ENCODE measurements at regions of chr19 and their contacts with region 1.

Region 1: DNA sequence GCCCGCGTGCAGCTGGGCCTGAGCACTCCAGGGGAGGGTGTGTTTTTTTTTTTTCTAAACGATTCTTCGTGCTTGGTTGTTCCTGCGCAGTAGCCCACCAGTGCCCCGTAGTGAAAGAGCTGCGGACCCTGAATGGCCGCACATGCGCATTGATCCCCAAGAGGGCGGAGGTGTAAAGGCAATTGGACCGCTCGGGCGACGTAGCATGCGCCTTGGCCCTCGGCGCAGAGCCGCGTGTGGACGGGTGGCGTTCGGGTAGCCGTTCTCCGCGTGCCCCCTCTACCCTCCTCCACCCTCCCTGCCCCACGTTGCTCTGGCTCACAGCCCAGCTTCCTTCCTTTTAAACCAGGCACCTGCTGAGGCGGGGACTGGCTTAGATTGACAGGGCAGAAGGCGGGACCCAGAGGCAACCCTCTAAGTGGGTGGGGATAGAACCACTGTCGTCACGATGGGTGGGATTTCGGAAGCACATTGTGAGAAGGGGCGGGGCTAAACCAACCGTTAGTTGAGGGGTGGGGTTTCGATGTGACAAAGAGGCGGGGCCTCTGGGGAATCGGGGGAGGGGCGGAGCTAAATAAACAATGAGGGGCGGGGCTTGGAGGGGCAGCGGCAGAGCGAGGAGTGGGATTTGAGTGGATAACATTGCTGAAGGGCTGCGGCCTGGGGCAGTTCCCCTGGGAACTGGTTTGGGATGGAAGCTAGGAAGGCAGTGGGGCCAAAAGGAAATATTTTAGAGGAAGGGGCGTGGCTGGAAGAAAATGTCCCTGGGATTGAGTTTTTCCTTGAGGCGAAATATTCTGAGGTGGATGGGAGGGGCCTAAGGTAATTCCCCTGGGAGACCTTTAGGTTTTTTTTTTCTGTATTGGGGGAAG is 543 bp upstream of the NUP62 start:
- DNase-seq: peak; percentile 95
- H3K4me3 Mint-ChIP-seq: peak overlapping the region; percentile 95
- H3K27ac Mint-ChIP-seq: peak overlapping the region; percentile 97
- H3K4me1 Mint-ChIP-seq: peaks cover 68% of the 10 kb centered on the region
- H3K27me3 Mint-ChIP-seq: no peaks in the 10 kb centered on the region

Region 2: GRCh38 chr19:49858031-49858991 is 71.5 kb before region 1 on chr19:
- CTCF ChIA-PET with region 1: no interaction called
- POLR2A ChIA-PET with region 1: no interaction called
- DNase-seq: no peak
- H3K4me3 Mint-ChIP-seq: no peak overlapping the region
- H3K27ac Mint-ChIP-seq: no peak overlapping the region
- H3K4me1 Mint-ChIP-seq: peaks cover 5% of the 10 kb centered on the region
- H3K27me3 Mint-ChIP-seq: no peaks in the 10 kb centered on the region

Region 3: GRCh38 chr19:49869441-49870176 is 60.2 kb before region 1 on chr19:
- CTCF ChIA-PET with region 1: interaction called, 3 read pairs
- POLR2A ChIA-PET with region 1: interaction called, 10 read pairs
- DNase-seq: peak; percentile 94
- H3K4me3 Mint-ChIP-seq: no peak overlapping the region
- H3K27ac Mint-ChIP-seq: no peak overlapping the region
- H3K4me1 Mint-ChIP-seq: peaks cover 46% of the 10 kb centered on the region
- H3K27me3 Mint-ChIP-seq: no peaks in the 10 kb centered on the region

Region 4: GRCh38 chr19:49877020-49877878 is 52.6 kb before region 1 on chr19 and contains the starts of genes AKT1S1 and TBC1D17:
- CTCF ChIA-PET with region 1: no interaction called
- POLR2A ChIA-PET with region 1: interaction called, 39 read pairs
- DNase-seq: peak; percentile 99
- H3K4me3 Mint-ChIP-seq: no peak within 1 kb of the TSS
- H3K27ac Mint-ChIP-seq: no peak within 1 kb of the TSS
- H3K4me1 Mint-ChIP-seq: peaks cover 32% of the 10 kb centered on the region
- H3K27me3 Mint-ChIP-seq: no peaks in the 10 kb centered on the region
- total RNA-seq, gene AKT1S1: 20.2 to 23.0 TPM
- total RNA-seq, gene TBC1D17: 42.3 to 47.6 TPM

Region 5: GRCh38 chr19:49889687-49890348 is 40.0 kb before region 1 on chr19:
- CTCF ChIA-PET with region 1: no interaction called
- POLR2A ChIA-PET with region 1: interaction called, 43 read pairs
- DNase-seq: peak; percentile 79
- H3K4me3 Mint-ChIP-seq: peak overlapping the region; percentile 68
- H3K27ac Mint-ChIP-seq: peak overlapping the region; percentile 62
- H3K4me1 Mint-ChIP-seq: peaks cover 33% of the 10 kb centered on the region
- H3K27me3 Mint-ChIP-seq: no peaks in the 10 kb centered on the region

Region 6: DNA sequence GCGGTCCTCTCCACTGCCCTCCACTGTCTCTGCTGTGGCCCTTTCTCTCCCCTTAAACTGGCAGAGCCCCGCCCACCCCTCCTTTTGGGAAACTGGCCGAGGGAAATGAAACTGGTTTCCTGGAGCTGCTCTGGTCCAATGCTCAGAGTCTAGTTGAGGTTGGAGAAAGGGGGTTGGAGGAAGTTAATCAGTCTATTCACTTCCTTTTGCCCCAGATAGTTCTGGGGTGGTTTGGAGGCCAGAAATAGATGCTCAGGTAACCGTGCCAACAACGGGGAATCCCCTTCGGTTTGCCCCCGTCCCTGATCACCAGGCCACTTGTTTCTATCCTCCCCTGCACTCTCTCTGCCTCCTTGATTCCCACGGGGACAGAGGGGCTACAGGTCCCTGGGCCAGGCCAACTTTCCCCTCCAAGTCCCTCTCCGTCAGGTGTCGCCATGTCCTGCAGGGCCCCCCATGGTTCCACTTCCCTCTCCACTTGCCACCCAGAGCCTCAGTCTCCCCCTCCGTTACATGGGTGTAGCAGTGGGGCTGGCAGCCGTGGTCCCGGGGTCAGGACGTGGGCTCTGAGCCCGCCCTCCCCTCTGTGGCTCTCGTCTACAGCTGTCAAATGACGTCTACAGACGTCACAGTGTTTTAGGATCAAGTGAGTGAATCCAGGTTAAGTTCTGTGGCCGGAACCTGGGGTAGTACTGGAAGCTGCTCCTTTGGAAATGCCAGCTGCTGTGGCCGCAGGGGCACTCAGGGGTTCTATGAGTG is 32.8 kb before region 1 on chr19 and contains the start of gene IL4I1:
- CTCF ChIA-PET with region 1: interaction called, 4 read pairs
- POLR2A ChIA-PET with region 1: interaction called, 43 read pairs
- DNase-seq: peak; percentile 76
- H3K4me3 Mint-ChIP-seq: peak within 1 kb of the TSS; percentile 80
- H3K27ac Mint-ChIP-seq: peak within 1 kb of the TSS; percentile 97
- H3K4me1 Mint-ChIP-seq: peaks cover 52% of the 10 kb centered on the region
- H3K27me3 Mint-ChIP-seq: no peaks in the 10 kb centered on the region
- total RNA-seq, gene IL4I1: 25.7 to 26.4 TPM

Region 7: GRCh38 chr19:49911381-49912145 is 18.3 kb before region 1 on chr19:
- CTCF ChIA-PET with region 1: interaction called, 3 read pairs
- POLR2A ChIA-PET with region 1: interaction called, 23 read pairs
- DNase-seq: no peak
- H3K4me3 Mint-ChIP-seq: no peak overlapping the region
- H3K27ac Mint-ChIP-seq: peak overlapping the region; percentile 71
- H3K4me1 Mint-ChIP-seq: peaks cover 46% of the 10 kb centered on the region
- H3K27me3 Mint-ChIP-seq: no peaks in the 10 kb centered on the region

Region 8: DNA sequence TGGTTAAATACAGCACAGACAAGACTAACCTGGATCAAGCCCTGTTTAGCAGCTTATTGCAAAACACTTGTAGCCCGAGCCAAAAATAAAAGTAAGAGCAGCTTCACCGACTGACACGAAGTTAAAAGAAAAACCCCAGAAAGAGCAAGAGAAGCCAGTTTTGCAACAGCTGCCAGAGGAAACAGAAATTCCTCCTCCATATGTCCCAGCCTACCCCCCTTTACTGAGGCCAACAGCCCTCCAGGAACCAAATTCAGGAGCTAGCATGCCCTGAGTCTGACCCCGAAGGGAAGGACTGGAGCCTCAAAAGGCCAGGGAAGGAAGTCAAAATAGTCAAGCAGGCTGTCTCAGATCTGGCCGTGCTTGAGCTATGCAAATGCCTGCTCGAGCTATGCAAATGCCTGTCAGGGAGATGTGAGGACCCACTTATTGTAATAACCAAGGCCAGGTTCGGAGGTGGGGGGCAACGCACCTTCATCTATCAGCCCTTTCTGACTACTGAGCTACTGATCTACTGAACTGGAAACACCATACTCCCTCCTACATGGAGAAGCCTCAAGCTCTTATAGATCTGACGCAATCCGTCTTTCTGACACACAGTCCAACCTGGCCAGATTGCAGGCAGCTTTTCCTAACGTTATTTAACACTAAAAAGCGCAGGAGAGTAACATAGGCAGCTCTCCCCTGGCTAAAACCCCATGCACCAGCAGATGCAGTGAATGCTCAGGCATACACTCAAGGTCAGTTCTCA is 24.4 kb after region 1 on chr19:
- CTCF ChIA-PET with region 1: no interaction called
- POLR2A ChIA-PET with region 1: no interaction called
- DNase-seq: no peak
- H3K4me3 Mint-ChIP-seq: no peak overlapping the region
- H3K27ac Mint-ChIP-seq: no peak overlapping the region
- H3K4me1 Mint-ChIP-seq: peaks cover 3% of the 10 kb centered on the region
- H3K27me3 Mint-ChIP-seq: peaks cover 16% of the 10 kb centered on the region

Region 9: GRCh38 chr19:50025024-50025789 is 95.4 kb after region 1 on chr19 and contains the start of gene VRK3:
- CTCF ChIA-PET with region 1: interaction called, 3 read pairs
- POLR2A ChIA-PET with region 1: interaction called, 17 read pairs
- DNase-seq: peak; percentile 98
- H3K4me3 Mint-ChIP-seq: peak within 1 kb of the TSS; percentile 85
- H3K27ac Mint-ChIP-seq: peak within 1 kb of the TSS; percentile 86
- H3K4me1 Mint-ChIP-seq: peaks cover 49% of the 10 kb centered on the region
- H3K27me3 Mint-ChIP-seq: no peaks in the 10 kb centered on the region
- total RNA-seq, gene VRK3: 80.0 to 80.6 TPM